ENCODE measurements at regions of chr15 and their contacts with region 1.

Region 1: DNA sequence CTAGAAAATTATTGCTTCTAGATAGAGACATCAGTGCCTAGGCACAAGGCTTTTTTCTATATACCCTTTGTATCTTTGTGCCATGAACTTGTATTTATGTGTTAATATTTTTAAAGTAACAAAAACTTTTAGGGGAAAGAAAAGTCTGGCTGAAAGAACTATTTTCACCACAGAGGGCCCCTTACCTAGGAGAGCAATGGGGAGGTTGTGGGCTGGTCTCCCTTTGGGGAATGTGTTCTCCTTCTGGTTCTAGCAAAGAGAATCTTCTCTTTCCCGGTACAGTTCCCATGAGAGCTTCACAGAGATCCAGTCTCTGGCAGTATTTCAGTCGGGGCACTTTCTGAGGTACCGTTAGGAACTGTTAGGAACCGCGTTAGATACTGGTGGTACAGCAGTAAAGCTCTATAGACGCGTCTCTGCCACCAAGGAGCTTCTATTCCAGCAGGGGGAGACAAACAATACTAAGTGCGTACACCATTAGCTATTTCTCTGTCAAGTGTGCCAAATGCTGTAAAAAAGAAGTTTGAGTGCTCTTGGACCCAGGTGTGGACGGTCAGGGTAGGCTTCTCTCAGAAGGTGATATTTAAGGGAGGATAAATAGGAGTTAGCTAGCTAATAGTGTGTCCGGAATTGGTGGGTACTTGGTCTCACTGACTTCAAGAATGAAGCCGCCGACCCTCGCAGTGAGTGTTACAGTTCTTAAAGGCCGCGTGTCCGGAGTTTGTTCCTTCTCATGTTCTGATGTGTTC is 4.6 kb upstream of the EPB42 start:
- DNase-seq: peak; percentile 57
- H3K27ac ChIP-seq: no peak overlapping the region
- CTCF ChIP-seq: peak; percentile 80

Region 2: GRCh38 chr15:43249699-43250203 is 24.4 kb after region 1 on chr15:
- CTCF ChIA-PET with region 1: interaction called, 10 read pairs
- POLR2A ChIA-PET with region 1: no interaction called
- DNase-seq: no peak
- H3K27ac ChIP-seq: no peak overlapping the region
- CTCF ChIP-seq: no peak

Region 3: DNA sequence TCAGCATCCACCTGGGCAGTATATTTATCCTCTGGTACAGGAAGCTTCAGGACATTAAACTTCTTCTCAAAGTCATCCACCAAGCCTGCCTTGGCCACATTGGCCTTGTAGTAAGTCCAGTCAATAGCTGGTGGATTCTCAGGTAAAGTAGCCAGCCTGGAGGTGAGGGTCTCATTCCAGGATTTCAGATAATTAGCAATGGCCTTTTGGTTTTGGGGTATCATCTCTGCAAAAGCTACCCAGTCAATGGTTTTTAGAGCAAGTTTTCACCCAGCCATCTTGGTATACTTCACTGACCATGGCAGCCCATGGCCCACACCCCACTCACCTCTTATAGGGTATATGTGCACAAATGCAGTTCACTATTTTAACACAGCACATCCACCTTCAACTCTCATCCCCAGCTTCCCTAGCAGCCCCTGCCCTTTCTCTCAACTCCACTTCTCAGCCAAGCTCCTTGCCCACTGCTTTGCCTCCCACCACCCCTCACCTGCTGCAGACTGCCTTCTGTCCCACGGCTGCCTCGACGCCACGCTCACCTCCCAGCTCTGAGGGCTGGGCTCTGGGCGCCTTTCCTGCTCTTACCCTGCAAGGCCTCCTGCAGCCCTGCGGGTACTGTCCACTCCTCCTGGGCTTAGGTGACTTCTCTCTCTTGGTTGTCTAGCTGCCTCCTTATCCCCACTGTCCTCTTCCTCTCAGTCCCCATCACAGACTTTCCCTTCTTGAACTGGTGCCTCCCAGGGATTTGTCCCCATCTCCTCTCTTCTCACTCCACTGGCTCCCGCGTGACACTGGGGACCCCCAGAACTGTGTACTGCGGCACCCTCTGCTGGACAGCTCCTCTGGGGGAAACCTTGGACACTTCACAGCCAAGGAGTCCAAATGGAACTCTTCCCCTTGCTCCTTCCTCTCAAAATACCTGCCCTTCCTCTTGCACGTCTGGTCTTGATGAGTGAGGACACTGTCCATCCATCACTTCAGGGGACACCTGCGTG is 43.0 kb after region 1 on chr15:
- CTCF ChIA-PET with region 1: interaction called, 26 read pairs
- POLR2A ChIA-PET with region 1: no interaction called
- DNase-seq: no peak
- H3K27ac ChIP-seq: no peak overlapping the region
- CTCF ChIP-seq: no peak

Region 4: DNA sequence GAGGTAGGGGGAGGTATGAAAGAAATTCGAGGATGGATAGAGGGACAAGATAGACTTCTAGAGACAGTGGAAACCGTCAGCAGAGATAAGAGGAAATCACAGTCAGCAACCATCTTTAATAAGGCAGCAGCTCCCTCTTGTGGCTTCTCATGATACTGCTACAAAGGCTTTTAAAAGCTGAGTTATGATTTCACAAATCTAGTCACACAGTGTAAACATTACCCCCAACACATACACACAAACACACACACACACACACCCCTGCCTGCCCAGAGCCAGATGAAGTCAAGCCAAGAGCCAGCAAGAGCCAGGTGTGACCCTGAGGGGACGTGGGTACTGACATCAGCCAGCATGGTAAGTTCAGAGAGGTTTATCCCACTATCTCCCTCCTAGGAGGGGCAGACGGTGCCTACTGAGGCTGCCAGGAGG is 60.2 kb after region 1 on chr15:
- CTCF ChIA-PET with region 1: interaction called, 95 read pairs
- POLR2A ChIA-PET with region 1: no interaction called
- DNase-seq: peak; percentile 82
- H3K27ac ChIP-seq: no peak overlapping the region
- CTCF ChIP-seq: peak; percentile 93

Region 5: DNA sequence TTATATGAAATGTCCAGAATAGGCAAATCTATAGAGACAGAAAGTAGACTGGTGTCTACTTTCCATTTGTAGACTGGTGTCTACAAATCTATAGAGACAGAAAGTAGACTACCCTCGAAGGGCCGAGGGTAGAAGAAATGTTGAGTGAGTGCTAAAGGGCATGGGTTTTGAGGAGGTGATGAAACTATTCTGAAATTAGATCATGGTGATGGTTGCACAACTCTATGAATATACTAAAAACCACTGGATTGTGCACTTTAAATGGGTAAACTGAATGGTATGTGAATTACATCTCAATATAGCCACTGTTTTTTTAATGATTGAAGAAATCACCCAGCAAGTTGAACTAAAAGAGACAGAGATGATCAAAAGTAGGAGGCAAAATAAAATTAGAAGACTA is 239.7 kb after region 1 on chr15:
- CTCF ChIA-PET with region 1: no interaction called
- POLR2A ChIA-PET with region 1: no interaction called
- DNase-seq: no peak
- H3K27ac ChIP-seq: no peak overlapping the region
- CTCF ChIP-seq: no peak